ENCODE measurements at regions of chr2 and their contacts with region 1.

Region 1: GRCh38 chr2:172253190-172254052 is 150.7 kb upstream of the DLX2 start:
- DNase-seq: peak; percentile 99
- H3K4me3 ChIP-seq: no peak overlapping the region
- H3K27ac ChIP-seq: peak overlapping the region; percentile 94
- H3K4me1 ChIP-seq: peaks cover 57% of the 10 kb centered on the region
- H3K27me3 ChIP-seq: no peaks in the 10 kb centered on the region
- CTCF ChIP-seq: no peak

Region 2: GRCh38 chr2:172172513-172173173 is 80.8 kb before region 1 on chr2:
- CTCF ChIA-PET with region 1: no interaction called
- dilution Hi-C with region 1: no loop called
- in situ Hi-C with region 1: no loop called
- intact Hi-C with region 1: loop called (anchors 2 kb)
- DNase-seq: peak; percentile 66
- H3K4me3 ChIP-seq: peak overlapping the region; percentile 56 to 74 (median 64)
- H3K27ac ChIP-seq: peak overlapping the region; percentile 53
- H3K4me1 ChIP-seq: peaks cover 17% of the 10 kb centered on the region
- H3K27me3 ChIP-seq: no peaks in the 10 kb centered on the region
- CTCF ChIP-seq: peak; percentile 70 to 87

Region 3: DNA sequence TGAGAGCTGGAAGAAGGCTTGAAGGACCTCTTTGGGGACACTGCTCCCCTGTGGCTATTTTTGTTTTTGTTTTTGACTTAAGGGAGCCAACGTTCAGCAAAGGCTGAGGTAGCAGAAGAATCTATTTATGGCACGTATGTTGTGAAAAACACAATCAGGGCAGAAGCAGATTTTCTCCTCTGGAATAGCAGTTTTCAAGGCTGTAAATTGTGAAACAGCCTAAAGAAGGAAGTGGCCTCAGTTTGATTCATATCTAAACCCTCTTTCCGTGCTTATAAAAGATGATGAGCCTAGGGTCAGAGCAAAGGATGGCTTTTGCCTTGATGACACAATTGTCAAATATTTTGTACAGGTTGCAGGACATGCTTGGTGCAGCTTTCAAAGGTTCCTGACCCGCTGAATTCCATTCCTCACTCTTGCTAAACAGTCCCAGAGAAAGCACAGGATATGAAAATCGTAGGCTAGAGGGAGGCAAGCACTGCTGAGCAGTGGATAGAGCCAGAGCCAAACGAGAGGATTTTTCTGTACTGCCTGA is 44.6 kb before region 1 on chr2:
- CTCF ChIA-PET with region 1: no interaction called
- dilution Hi-C with region 1: no loop called
- in situ Hi-C with region 1: no loop called
- intact Hi-C with region 1: loop called (anchors 1 kb)
- DNase-seq: peak; percentile 80
- H3K4me3 ChIP-seq: no peak overlapping the region
- H3K27ac ChIP-seq: peak overlapping the region; percentile 47
- H3K4me1 ChIP-seq: peaks cover 28% of the 10 kb centered on the region
- H3K27me3 ChIP-seq: no peaks in the 10 kb centered on the region
- CTCF ChIP-seq: peak in 1 of 2 donors; percentile 28

Region 4: DNA sequence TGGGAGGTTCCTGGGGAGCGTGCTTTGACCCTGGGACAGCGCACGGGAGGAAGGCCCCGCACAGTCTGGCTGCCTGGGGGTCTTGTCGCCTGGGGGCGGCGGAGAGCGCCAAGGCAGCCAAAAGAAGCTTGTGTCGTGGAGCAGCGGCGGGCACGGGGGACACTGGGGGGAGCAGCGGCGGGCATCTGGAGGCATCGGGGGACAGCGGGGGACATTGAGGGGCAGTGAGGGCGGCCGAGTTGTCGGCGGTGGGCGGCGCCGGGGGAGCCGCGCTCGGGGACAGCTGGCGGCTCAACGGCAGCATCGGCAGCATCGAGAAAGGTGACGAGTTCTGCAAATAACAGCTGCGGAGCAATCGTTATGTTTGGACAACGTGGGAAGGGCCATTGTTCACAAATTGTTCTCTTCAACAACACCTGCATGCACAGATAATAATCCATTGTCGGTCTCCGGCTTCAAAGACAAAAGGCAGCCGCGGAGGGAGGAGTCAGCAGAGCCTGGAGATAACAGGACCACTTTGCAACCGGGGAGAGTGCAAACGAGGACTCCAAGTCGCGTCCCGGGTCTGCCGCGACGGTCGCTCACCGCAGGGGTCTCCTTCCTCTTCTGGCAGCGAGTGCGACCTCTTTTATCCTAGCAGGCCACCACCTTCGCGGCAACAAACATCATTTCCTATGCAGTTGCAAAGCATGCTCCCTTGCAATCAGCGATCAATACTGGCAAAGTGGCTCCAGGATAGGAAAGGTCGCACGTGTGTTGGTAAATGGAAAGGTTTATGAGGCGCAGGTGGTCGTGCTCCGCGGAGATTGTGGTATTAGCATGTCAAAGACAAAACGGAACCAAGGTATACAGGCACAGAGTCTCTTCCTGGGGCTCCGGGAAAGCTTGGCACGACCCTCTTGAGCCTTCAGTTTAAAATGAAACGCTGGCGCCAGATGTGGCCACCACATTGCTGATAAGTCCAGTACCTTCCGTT is 18.4 kb before region 1 on chr2:
- CTCF ChIA-PET with region 1: no interaction called
- dilution Hi-C with region 1: no loop called
- in situ Hi-C with region 1: no loop called
- intact Hi-C with region 1: loop called (anchors 1 kb)
- DNase-seq: no peak
- H3K4me3 ChIP-seq: peak overlapping the region; percentile 3 to 23 (median 16)
- H3K27ac ChIP-seq: no peak overlapping the region
- H3K4me1 ChIP-seq: peaks cover 49% of the 10 kb centered on the region
- H3K27me3 ChIP-seq: no peaks in the 10 kb centered on the region
- CTCF ChIP-seq: no peak

Region 5: GRCh38 chr2:172404824-172405223 is 151.4 kb after region 1 on chr2:
- CTCF ChIA-PET with region 1: no interaction called
- dilution Hi-C with region 1: no loop called
- in situ Hi-C with region 1: no loop called
- intact Hi-C with region 1: loop called (anchors 1 kb)
- DNase-seq: peak; percentile 82
- H3K4me3 ChIP-seq: no peak overlapping the region
- H3K27ac ChIP-seq: peak overlapping the region; percentile 52
- H3K4me1 ChIP-seq: peaks cover 60% of the 10 kb centered on the region
- H3K27me3 ChIP-seq: no peaks in the 10 kb centered on the region
- CTCF ChIP-seq: no peak

Region 6: GRCh38 chr2:172442072-172442895 is 188.9 kb after region 1 on chr2:
- CTCF ChIA-PET with region 1: no interaction called
- dilution Hi-C with region 1: no loop called
- in situ Hi-C with region 1: no loop called
- intact Hi-C with region 1: loop called (anchors 5 kb)
- DNase-seq: peak; percentile 100
- H3K4me3 ChIP-seq: peak overlapping the region in 1 of 3 experiments; percentile 19
- H3K27ac ChIP-seq: peak overlapping the region; percentile 99
- H3K4me1 ChIP-seq: peaks cover 79% of the 10 kb centered on the region
- H3K27me3 ChIP-seq: no peaks in the 10 kb centered on the region
- CTCF ChIP-seq: no peak

Region 7: GRCh38 chr2:172484253-172484652 is 230.8 kb after region 1 on chr2:
- CTCF ChIA-PET with region 1: no interaction called
- dilution Hi-C with region 1: no loop called
- in situ Hi-C with region 1: no loop called
- intact Hi-C with region 1: no loop called
- DNase-seq: no peak
- H3K4me3 ChIP-seq: no peak overlapping the region
- H3K27ac ChIP-seq: no peak overlapping the region
- H3K4me1 ChIP-seq: no peaks in the 10 kb centered on the region
- H3K27me3 ChIP-seq: no peaks in the 10 kb centered on the region
- CTCF ChIP-seq: peak; percentile 6 to 16

Region 8: DNA sequence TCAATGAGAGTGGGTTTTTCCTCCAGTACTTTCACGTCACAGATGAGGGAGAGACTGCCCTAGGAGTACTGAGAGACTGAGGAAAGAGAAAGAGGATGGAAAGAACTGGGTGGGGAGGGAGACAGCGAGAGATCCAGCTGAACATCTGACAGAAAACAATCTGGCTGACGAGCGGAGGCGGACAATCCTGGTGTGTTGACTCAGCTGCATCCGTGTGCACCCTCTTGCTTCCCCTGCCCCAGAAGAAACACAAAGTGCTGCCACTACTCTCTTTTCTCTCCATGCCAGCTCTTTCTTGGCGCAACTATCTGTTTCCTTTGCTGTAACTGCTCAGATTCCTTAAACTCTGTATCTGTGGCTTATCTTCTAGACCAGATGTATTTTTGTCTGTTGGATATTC is 489.7 kb after region 1 on chr2:
- CTCF ChIA-PET with region 1: no interaction called
- dilution Hi-C with region 1: no loop called
- in situ Hi-C with region 1: no loop called
- intact Hi-C with region 1: no loop called
- DNase-seq: no peak
- H3K4me3 ChIP-seq: no peak overlapping the region
- H3K27ac ChIP-seq: no peak overlapping the region
- H3K4me1 ChIP-seq: no peaks in the 10 kb centered on the region
- H3K27me3 ChIP-seq: no peaks in the 10 kb centered on the region
- CTCF ChIP-seq: no peak

Measured in mammary epithelial cell (primary cell).